CD4-positive, alpha-beta memory T cell (primary cell): ENCODE measurements at regions of chr6 and their contacts with region 1.

Region 1: DNA sequence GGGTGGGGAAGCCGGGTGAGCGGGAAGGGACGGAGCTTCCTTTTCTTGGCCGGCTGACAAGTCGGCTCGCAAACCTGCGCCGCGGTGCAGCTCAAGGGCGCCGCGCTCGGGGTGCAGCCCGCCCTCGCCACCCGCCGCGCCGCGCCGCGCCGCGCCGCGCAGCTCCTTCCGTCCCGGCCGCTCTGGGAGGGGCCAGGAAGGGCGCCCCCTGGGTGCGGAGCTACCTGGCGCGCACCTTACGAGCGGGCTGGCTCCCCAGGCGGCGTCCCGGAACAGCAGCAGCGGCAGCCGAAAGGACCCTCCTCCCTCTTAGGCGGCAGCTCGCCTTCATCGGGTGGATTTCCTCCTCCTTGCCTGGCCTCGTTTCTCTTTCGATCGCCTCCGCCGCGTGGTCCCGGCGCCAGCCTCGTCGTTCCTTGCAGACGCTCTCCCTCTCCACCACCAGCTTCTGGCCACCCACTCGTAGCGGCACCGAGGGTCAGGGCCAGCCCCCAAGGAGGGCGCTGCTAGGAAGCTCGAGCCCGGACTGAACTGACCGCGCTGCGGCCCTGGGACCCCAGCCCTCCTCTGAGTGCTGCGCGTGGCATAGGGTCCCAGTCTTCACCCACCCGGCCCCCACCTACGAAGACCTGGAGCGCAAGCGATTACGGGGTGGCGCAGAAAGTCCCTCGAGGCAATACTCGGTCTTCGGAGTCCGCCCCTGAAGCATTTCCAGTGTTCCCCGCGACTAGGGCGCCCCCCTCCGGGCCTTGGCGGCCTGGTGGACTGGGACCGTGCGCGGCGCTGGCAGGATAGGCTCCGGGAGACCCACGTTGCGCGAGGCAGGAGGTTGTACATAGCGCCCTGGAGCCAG is at the start of gene MAP3K5:
- DNase-seq: peak; percentile 94 to 95 (median 94)
- H3K4me3 ChIP-seq: peak within 1 kb of the TSS; percentile 68 to 100
- H3K4me3 Mint-ChIP-seq: peak within 1 kb of the TSS; percentile 94 to 100 (median 97)
- H3K27ac ChIP-seq: peak within 1 kb of the TSS; percentile 99
- H3K27ac Mint-ChIP-seq: peak within 1 kb of the TSS; percentile 93 to 98 (median 97)
- H3K4me1 ChIP-seq: peaks cover 41% of the 10 kb centered on the region
- H3K4me1 Mint-ChIP-seq: peaks cover 22 to 49% (median 27%) of the 10 kb centered on the region in 4 donors
- H3K27me3 ChIP-seq: no peaks in the 10 kb centered on the region
- H3K27me3 Mint-ChIP-seq: no peaks in the 10 kb centered on the region
- total RNA-seq, gene MAP3K5: 31.4 to 31.7 TPM

Region 2: GRCh38 chr6:136593748-136594490 is 198.7 kb before region 1 on chr6:
- CTCF ChIA-PET with region 1: interaction called, 5 read pairs
- POLR2A ChIA-PET with region 1: interaction called, 10 read pairs
- intact Hi-C with region 1: no loop called
- DNase-seq: peak; percentile 33 to 69 (median 45)
- H3K4me3 ChIP-seq: no peak overlapping the region
- H3K4me3 Mint-ChIP-seq: peak overlapping the region in 7 of 8 donors; percentile 34 to 79 (median 54)
- H3K27ac ChIP-seq: peak overlapping the region; percentile 42
- H3K27ac Mint-ChIP-seq: peak overlapping the region; percentile 44 to 86 (median 82)
- H3K4me1 ChIP-seq: peaks cover 21% of the 10 kb centered on the region
- H3K4me1 Mint-ChIP-seq: peaks cover 23 to 34% (median 27%) of the 10 kb centered on the region in 4 donors
- H3K27me3 ChIP-seq: no peaks in the 10 kb centered on the region
- H3K27me3 Mint-ChIP-seq: no peaks in the 10 kb centered on the region

Region 3: GRCh38 chr6:136651982-136652381 is 140.7 kb before region 1 on chr6:
- CTCF ChIA-PET with region 1: interaction called, 747 read pairs
- POLR2A ChIA-PET with region 1: interaction called, 198 read pairs
- intact Hi-C with region 1: no loop called
- DNase-seq: no peak
- H3K4me3 ChIP-seq: no peak overlapping the region
- H3K4me3 Mint-ChIP-seq: no peak overlapping the region
- H3K27ac ChIP-seq: no peak overlapping the region
- H3K27ac Mint-ChIP-seq: peak overlapping the region in 1 of 7 donors; percentile 55
- H3K4me1 ChIP-seq: peaks cover 14% of the 10 kb centered on the region
- H3K4me1 Mint-ChIP-seq: peaks cover 0 to 3% (median 1%) of the 10 kb centered on the region in 4 donors
- H3K27me3 ChIP-seq: no peaks in the 10 kb centered on the region
- H3K27me3 Mint-ChIP-seq: no peaks in the 10 kb centered on the region

Region 4: DNA sequence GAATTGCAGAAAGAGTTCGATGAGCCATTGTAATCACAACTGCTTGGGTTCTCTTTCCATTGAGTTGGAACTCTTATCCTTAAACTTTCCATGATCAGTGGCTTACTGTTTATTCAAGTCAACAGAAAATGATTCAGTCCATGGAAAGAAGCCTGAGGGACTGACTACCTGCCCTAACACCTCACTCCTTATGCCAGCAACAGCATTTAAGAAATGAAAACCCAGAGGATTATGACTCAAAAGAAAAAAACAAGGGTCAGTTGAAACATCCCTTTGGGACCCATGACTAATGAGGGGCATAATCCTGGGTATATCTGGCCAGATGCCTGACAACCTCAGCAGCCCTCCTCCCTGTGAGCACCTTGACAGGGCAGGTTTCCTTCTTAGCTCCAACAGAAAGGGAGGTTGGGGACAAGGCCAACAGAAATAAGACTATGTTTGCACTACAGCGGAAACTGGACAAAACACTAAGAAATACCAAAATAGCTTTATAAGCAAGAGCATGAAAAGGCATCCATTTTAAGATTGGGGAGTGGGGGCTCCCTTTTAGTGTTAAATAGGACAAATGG is 107.0 kb before region 1 on chr6:
- CTCF ChIA-PET with region 1: interaction called, 15 read pairs
- POLR2A ChIA-PET with region 1: interaction called, 7 read pairs
- intact Hi-C with region 1: no loop called
- DNase-seq: no peak
- H3K4me3 ChIP-seq: no peak overlapping the region
- H3K4me3 Mint-ChIP-seq: no peak overlapping the region
- H3K27ac ChIP-seq: no peak overlapping the region
- H3K27ac Mint-ChIP-seq: peak overlapping the region in 2 of 7 donors; percentile 41 to 72
- H3K4me1 ChIP-seq: no peaks in the 10 kb centered on the region
- H3K4me1 Mint-ChIP-seq: peaks cover 0 to 17% (median 14%) of the 10 kb centered on the region in 4 donors
- H3K27me3 ChIP-seq: no peaks in the 10 kb centered on the region
- H3K27me3 Mint-ChIP-seq: no peaks in the 10 kb centered on the region

Region 5: DNA sequence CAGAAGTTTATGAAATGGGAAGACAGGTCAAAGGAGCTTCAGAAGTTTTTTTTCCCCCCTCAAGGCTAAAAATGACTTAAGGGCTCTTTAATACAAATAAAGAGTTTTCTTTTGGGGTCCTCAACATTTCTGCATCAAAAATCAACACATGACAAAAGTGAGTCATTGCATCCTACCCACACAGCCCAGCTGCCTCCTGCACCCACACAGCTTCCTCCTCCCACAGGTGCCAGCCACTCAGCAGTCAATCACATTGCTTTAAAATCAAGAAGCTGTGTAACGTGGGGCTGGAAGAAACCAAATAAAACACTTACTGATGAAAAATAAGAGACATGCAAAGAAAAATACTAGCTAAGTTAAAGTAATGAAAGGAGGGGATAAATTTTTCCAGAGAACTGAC is 68.9 kb before region 1 on chr6:
- CTCF ChIA-PET with region 1: interaction called, 139 read pairs
- POLR2A ChIA-PET with region 1: interaction called, 24 read pairs
- intact Hi-C with region 1: no loop called
- DNase-seq: peak in 4 of 5 donors; percentile 9 to 49 (median 32)
- H3K4me3 ChIP-seq: no peak overlapping the region
- H3K4me3 Mint-ChIP-seq: peak overlapping the region in 5 of 8 donors; percentile 12 to 54 (median 39)
- H3K27ac ChIP-seq: no peak overlapping the region
- H3K27ac Mint-ChIP-seq: peak overlapping the region in 4 of 7 donors; percentile 28 to 54 (median 50)
- H3K4me1 ChIP-seq: peaks cover 37% of the 10 kb centered on the region
- H3K4me1 Mint-ChIP-seq: peaks cover 37 to 61% (median 45%) of the 10 kb centered on the region in 4 donors
- H3K27me3 ChIP-seq: no peaks in the 10 kb centered on the region
- H3K27me3 Mint-ChIP-seq: no peaks in the 10 kb centered on the region

Region 6: DNA sequence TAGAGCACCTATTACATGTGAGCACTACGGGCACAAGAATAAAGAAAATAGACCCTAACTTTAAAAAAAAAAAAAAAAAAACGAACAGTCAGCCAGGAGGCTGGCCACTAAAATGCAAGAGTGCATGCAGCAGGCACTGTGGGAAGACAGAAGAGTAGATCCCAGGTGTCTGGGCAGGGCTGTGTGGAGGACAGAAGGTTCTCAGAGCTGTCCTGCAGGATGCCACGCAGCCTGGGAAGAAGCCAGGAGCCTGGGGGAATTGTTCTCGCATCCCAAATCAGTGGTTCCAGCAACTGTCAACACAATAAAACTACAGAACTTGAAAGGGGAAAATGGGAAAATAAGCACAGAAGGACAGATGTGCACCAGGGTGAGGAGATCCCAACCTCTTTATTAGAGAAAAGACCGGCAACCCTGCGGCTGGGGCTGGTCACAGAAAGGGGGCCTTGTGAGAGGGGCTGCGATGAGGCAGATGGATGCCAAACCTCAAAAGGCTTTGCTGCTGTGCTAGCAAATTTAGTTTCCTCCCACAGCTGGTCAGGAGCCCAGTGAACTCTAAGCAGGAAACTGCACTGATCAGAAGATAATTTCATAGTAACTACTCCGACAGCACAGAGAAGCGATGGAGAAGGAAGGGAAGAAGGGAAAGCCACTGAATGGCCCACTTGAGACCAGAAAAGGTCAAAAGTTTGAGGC is 31.3 kb before region 1 on chr6:
- CTCF ChIA-PET with region 1: interaction called, 228 read pairs
- POLR2A ChIA-PET with region 1: interaction called, 323 read pairs
- intact Hi-C with region 1: loop called (anchors 1 kb)
- DNase-seq: peak in 3 of 5 donors; percentile 44 to 52 (median 48)
- H3K4me3 ChIP-seq: peak overlapping the region in 1 of 2 donors; percentile 4
- H3K4me3 Mint-ChIP-seq: peak overlapping the region; percentile 76 to 91 (median 84)
- H3K27ac ChIP-seq: peak overlapping the region; percentile 53
- H3K27ac Mint-ChIP-seq: peak overlapping the region; percentile 77 to 95 (median 92)
- H3K4me1 ChIP-seq: peaks cover 78% of the 10 kb centered on the region
- H3K4me1 Mint-ChIP-seq: peaks cover 62 to 68% (median 67%) of the 10 kb centered on the region in 4 donors
- H3K27me3 ChIP-seq: no peaks in the 10 kb centered on the region
- H3K27me3 Mint-ChIP-seq: no peaks in the 10 kb centered on the region

Region 7: GRCh38 chr6:136822376-136823127 is 29.9 kb after region 1 on chr6 and contains the start of gene PEX7:
- CTCF ChIA-PET with region 1: interaction called, 19 read pairs
- POLR2A ChIA-PET with region 1: interaction called, 38 read pairs
- intact Hi-C with region 1: loop called (anchors 1 kb)
- DNase-seq: peak; percentile 90 to 94 (median 93)
- H3K4me3 ChIP-seq: peak within 1 kb of the TSS; percentile 58 to 82
- H3K4me3 Mint-ChIP-seq: peak within 1 kb of the TSS; percentile 93 to 99 (median 96)
- H3K27ac ChIP-seq: peak within 1 kb of the TSS; percentile 87
- H3K27ac Mint-ChIP-seq: peak within 1 kb of the TSS; percentile 94 to 99 (median 97)
- H3K4me1 ChIP-seq: peaks cover 12% of the 10 kb centered on the region
- H3K4me1 Mint-ChIP-seq: peaks cover 13 to 46% (median 22%) of the 10 kb centered on the region in 4 donors
- H3K27me3 ChIP-seq: no peaks in the 10 kb centered on the region
- H3K27me3 Mint-ChIP-seq: peaks cover 6 to 8% of the 10 kb centered on the region in 2 donors
- total RNA-seq, gene PEX7: 4.4 to 5.8 TPM

Region 8: GRCh38 chr6:136846046-136846445 is 53.4 kb after region 1 on chr6:
- CTCF ChIA-PET with region 1: no interaction called
- POLR2A ChIA-PET with region 1: no interaction called
- intact Hi-C with region 1: no loop called
- DNase-seq: peak in 4 of 5 donors; percentile 30 to 34 (median 33)
- H3K4me3 ChIP-seq: no peak overlapping the region
- H3K4me3 Mint-ChIP-seq: no peak overlapping the region
- H3K27ac ChIP-seq: no peak overlapping the region
- H3K27ac Mint-ChIP-seq: no peak overlapping the region
- H3K4me1 ChIP-seq: no peaks in the 10 kb centered on the region
- H3K4me1 Mint-ChIP-seq: peaks cover 1 to 6% (median 3%) of the 10 kb centered on the region in 4 donors
- H3K27me3 ChIP-seq: no peaks in the 10 kb centered on the region
- H3K27me3 Mint-ChIP-seq: no peaks in the 10 kb centered on the region